ENCODE measurements at regions of chr17 and their contacts with region 1.

Region 1: DNA sequence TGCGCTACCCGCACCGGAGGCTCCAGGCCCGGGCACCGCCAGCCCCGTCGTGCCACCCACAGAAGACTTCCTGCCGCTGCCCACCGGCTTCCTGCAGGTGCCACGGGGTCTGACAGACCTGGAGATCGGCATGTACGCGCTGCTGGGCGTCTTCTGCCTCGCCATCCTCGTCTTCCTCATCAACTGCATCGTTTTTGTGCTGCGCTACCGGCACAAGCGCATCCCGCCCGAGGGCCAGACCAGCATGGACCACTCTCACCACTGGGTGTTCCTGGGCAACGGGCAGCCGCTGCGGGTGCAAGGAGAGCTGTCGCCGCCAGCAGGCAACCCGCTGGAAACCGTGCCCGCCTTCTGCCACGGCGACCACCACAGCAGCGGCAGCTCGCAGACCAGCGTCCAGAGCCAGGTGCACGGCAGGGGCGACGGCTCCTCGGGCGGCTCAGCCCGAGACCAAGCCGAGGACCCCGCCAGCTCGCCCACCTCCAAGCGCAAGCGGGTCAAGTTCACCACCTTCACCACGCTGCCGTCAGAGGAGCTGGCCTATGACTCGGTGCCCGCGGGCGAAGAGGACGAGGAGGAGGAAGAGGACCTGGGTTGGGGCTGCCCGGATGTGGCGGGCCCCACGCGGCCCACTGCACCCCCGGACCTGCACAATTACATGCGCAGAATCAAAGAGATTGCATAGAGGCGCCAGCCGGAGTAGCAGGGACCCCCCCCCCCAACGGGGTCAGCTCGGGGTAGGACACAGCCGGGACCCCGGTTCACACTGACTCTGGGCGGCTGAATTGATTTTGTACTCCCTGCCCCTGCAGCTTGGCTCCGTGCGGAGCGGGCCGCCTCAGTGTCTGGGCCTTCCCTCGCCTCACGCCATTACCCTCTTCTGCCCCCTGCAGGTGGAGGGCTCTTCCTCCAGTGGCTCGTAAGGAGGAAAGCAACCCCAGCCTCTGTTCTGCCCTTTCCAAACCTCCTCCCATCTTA is 58.5 kb downstream of the TMEM132E start:
- DNase-seq: peak; percentile 85
- ATAC-seq: peak; percentile 95
- H3K4me3 Mint-ChIP-seq: peak overlapping the region; percentile 3
- H3K27ac Mint-ChIP-seq: no peak overlapping the region
- H3K4me1 Mint-ChIP-seq: peaks cover 5% of the 10 kb centered on the region
- H3K27me3 Mint-ChIP-seq: peaks cover 58% of the 10 kb centered on the region

Region 2: GRCh38 chr17:34420254-34420766 is 217.5 kb before region 1 on chr17:
- CTCF ChIA-PET with region 1: interaction called, 19 read pairs
- DNase-seq: peak; percentile 75
- ATAC-seq: peak; percentile 45
- H3K4me3 Mint-ChIP-seq: no peak overlapping the region
- H3K27ac Mint-ChIP-seq: no peak overlapping the region
- H3K4me1 Mint-ChIP-seq: no peaks in the 10 kb centered on the region
- H3K27me3 Mint-ChIP-seq: peaks cover 60% of the 10 kb centered on the region

Region 3: GRCh38 chr17:34527908-34528470 is 109.8 kb before region 1 on chr17:
- CTCF ChIA-PET with region 1: no interaction called
- DNase-seq: no peak
- ATAC-seq: no peak
- H3K4me3 Mint-ChIP-seq: no peak overlapping the region
- H3K27ac Mint-ChIP-seq: no peak overlapping the region
- H3K4me1 Mint-ChIP-seq: no peaks in the 10 kb centered on the region
- H3K27me3 Mint-ChIP-seq: peaks cover 35% of the 10 kb centered on the region

Region 4: DNA sequence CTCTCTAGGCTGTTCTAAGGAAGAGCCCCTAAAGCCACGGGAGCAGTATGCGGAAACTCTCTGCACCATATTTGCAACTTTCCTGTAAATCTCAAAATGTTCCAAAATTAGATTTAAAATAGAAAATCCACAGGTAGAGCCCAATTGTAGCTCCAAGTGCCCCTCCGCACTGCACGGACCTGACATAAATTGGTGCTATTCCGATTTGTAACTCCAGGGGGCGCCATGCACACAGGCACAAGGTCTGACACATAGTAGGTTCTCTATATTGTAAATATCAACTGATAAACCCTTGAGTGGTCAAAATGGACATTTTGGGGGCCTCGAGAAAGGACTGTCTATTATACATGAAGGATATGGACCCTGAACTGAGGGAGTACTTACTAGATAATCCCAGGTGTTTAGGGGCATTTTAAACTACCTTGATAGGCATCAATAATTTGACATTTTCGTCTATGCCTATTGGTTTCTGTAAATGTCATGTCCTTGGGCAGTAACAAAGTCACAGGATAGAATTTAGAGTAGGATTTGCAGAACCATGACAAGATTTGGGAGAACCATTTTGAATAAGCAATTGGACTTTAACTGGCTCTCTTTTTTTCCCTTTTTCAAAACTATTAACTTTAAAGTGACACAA is 95.0 kb before region 1 on chr17:
- CTCF ChIA-PET with region 1: interaction called, 47 read pairs
- DNase-seq: peak; percentile 55
- ATAC-seq: peak; percentile 30
- H3K4me3 Mint-ChIP-seq: no peak overlapping the region
- H3K27ac Mint-ChIP-seq: no peak overlapping the region
- H3K4me1 Mint-ChIP-seq: no peaks in the 10 kb centered on the region
- H3K27me3 Mint-ChIP-seq: peaks cover 54% of the 10 kb centered on the region